ENCODE measurements at regions of chr5 and their contacts with region 1.

Region 1: GRCh38 chr5:112263469-112263868 is 155.6 kb downstream of the EPB41L4A start:
- DNase-seq: no peak

Region 2: GRCh38 chr5:111254613-111255012 is 1008.9 kb before region 1 on chr5:
- intact Hi-C with region 1: loop called in 1 of 2 experiments (anchors 5 kb)
- DNase-seq: no peak

Region 3: GRCh38 chr5:111792471-111793058 is 470.9 kb before region 1 on chr5:
- intact Hi-C with region 1: no loop called
- DNase-seq: no peak

Region 4: DNA sequence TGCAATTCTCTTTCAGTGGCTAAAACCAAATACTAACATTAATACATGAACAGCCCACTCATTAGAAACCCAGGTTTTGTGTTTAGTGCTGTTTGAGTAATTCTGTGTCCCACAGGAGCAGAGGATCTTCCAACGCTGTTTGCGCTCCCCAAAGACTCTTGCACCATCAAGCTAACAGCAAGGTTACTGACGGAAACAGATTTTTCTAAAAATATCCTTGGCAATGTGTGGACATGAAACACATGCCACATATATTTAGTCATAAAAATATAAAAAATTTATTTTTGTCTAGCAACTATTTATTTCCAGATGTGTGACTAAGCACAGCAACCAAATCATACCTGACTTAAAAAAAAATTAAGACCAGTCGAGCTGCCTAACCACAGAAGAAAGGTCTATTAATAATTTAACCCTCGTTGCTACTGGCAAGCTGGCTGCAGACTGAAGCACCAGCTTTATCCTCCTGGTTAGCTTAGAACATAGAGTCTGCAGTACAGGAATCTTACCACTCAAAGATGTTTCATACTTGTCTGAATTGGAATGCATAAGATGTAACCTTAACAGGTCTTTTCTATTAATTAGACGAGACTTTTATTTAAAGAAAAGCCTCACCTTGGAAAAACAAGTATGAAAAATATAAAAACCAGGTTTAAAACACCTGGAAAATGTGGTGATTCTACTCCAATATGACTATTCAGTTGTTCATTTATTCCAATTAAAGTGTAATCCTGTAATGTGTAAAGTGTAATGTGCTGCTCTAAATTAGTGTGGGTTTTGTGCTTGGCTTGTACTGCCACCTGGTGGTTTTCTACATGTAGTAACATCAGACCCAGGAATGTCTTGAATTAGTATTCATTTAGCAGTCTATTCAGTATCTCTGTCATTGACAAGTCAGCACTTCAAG is 116.9 kb before region 1 on chr5:
- intact Hi-C with region 1: no loop called
- DNase-seq: no peak

Region 5: DNA sequence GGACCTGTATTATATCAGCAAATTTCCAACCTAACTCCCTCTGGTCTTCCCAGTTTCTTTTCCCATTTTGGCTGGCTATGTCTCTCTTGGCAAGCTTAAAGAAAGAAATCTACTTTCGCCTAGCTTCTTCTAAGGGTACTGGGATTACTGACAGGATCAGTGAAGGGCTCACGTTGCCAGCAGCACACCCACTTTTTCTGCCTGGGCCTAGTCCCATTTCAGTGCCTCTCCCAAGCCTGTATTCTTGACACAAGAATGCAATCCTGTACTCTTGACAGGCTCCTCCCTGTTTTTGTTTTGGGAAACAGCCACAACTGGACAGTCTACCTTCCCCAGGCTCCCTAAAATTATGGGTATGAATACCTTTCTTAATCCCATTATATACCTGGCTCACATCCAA is 14.8 kb before region 1 on chr5:
- intact Hi-C with region 1: no loop called
- DNase-seq: no peak